H1 (cell line): ENCODE measurements at regions of chr1 and their contacts with region 1.

Region 1: GRCh38 chr1:116763787-116764465 is 9.7 kb downstream of the CD2 start:
- DNase-seq: peak in 1 of 2 experiments; percentile 66
- H3K4me3 ChIP-seq: no peak overlapping the region
- H3K27ac ChIP-seq: no peak overlapping the region
- H3K4me1 ChIP-seq: no peaks in the 10 kb centered on the region
- H3K27me3 ChIP-seq: no peaks in the 10 kb centered on the region
- CTCF ChIP-seq: peak; percentile 59 to 76 (median 65)
- EP300 ChIP-seq: no peak
- POLR2A ChIP-seq: no peak
- RAD21 ChIP-seq: peak; percentile 54 to 60

Region 2: GRCh38 chr1:116737020-116737854 is 26.7 kb before region 1 on chr1:
- CTCF ChIA-PET with region 1: interaction called, 14 read pairs
- POLR2A ChIA-PET with region 1: no interaction called
- DNase-seq: peak; percentile 31 to 68
- H3K4me3 ChIP-seq: no peak overlapping the region
- H3K27ac ChIP-seq: no peak overlapping the region
- H3K4me1 ChIP-seq: no peaks in the 10 kb centered on the region
- H3K27me3 ChIP-seq: peaks cover 0 to 2% (median 0%) of the 10 kb centered on the region in 4 experiments; a peak in 1 of 7 replicates
- CTCF ChIP-seq: peak; percentile 85 to 90 (median 89)
- EP300 ChIP-seq: no peak
- POLR2A ChIP-seq: no peak
- RAD21 ChIP-seq: peak; percentile 97

Region 3: GRCh38 chr1:116777831-116778830 is 14.2 kb after region 1 on chr1:
- CTCF ChIA-PET with region 1: interaction called, 47 read pairs
- POLR2A ChIA-PET with region 1: no interaction called
- DNase-seq: peak in 1 of 2 experiments; percentile 28
- H3K4me3 ChIP-seq: no peak overlapping the region
- H3K27ac ChIP-seq: no peak overlapping the region
- H3K4me1 ChIP-seq: no peaks in the 10 kb centered on the region
- H3K27me3 ChIP-seq: no peaks in the 10 kb centered on the region
- CTCF ChIP-seq: no peak
- EP300 ChIP-seq: no peak
- POLR2A ChIP-seq: no peak
- RAD21 ChIP-seq: no peak

Region 4: DNA sequence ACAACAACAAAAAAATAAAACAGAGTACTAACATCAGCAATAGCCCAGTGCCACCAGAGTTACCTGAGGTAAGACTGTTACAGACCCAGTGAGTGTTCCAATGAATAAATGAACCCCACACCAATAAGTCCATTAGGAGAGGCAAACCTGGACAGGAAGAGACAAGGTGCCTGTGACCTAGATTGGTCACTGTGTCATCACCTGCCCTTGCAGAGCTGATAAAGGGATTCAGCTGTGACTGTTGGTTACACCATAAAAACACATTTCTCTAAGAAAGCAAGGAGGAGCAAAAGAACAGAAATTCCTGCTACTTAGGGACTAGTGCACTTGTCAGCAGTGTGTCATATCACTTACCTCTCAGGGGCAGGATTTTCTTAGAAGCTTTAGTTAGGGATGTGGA is 27.8 kb after region 1 on chr1:
- CTCF ChIA-PET with region 1: interaction called, 17 read pairs
- POLR2A ChIA-PET with region 1: interaction called, 3 read pairs
- DNase-seq: no peak
- H3K4me3 ChIP-seq: no peak overlapping the region
- H3K27ac ChIP-seq: no peak overlapping the region
- H3K4me1 ChIP-seq: peaks cover 0 to 3% (median 0%) of the 10 kb centered on the region in 4 experiments; a peak in 2 of 7 replicates
- H3K27me3 ChIP-seq: no peaks in the 10 kb centered on the region
- CTCF ChIP-seq: no peak
- EP300 ChIP-seq: no peak
- POLR2A ChIP-seq: no peak
- RAD21 ChIP-seq: no peak

Region 5: GRCh38 chr1:116817582-116818064 is 53.7 kb after region 1 on chr1:
- CTCF ChIA-PET with region 1: interaction called, 23 read pairs
- POLR2A ChIA-PET with region 1: no interaction called
- DNase-seq: peak; percentile 41 to 68
- H3K4me3 ChIP-seq: no peak overlapping the region
- H3K27ac ChIP-seq: no peak overlapping the region
- H3K4me1 ChIP-seq: no peaks in the 10 kb centered on the region
- H3K27me3 ChIP-seq: no peaks in the 10 kb centered on the region
- CTCF ChIP-seq: peak; percentile 59 to 97 (median 73)
- EP300 ChIP-seq: no peak
- POLR2A ChIP-seq: no peak
- RAD21 ChIP-seq: peak; percentile 63 to 75

Region 6: GRCh38 chr1:116881879-116882520 is 118.1 kb after region 1 on chr1:
- CTCF ChIA-PET with region 1: interaction called, 27 read pairs
- POLR2A ChIA-PET with region 1: no interaction called
- DNase-seq: peak in 1 of 2 experiments; percentile 54
- H3K4me3 ChIP-seq: no peak overlapping the region
- H3K27ac ChIP-seq: peak overlapping the region; percentile 26; the same call in 1 of the 2 replicates
- H3K4me1 ChIP-seq: peaks cover 4 to 20% (median 19%) of the 10 kb centered on the region in 4 experiments
- H3K27me3 ChIP-seq: no peaks in the 10 kb centered on the region
- CTCF ChIP-seq: peak; percentile 76 to 91 (median 79)
- EP300 ChIP-seq: no peak
- POLR2A ChIP-seq: no peak
- RAD21 ChIP-seq: peak; percentile 84 to 91